Adrenal gland (tissue), 19 donors: ENCODE measurements at regions of chr7 and their contacts with region 1.

Region 1: GRCh38 chr7:2354186-2354938 is at the start of gene EIF3B:
- DNase-seq: peak; percentile 88 to 96 (median 91)
- H3K4me3 ChIP-seq: peak within 1 kb of the TSS; percentile 61 to 94 (median 80)
- H3K27ac ChIP-seq: peak within 1 kb of the TSS; percentile 71 to 100 (median 96)
- H3K4me1 ChIP-seq: peaks cover 25 to 41% of the 10 kb centered on the region in 2 donors
- H3K27me3 ChIP-seq: no peaks in the 10 kb centered on the region
- CTCF ChIP-seq: peak in 3 of 6 experiments; percentile 5 to 30 (median 15)
- POLR2A ChIP-seq: peak; percentile 68 to 77
- total RNA-seq, gene EIF3B: 81.4 to 149 (median 110) TPM

Region 2: DNA sequence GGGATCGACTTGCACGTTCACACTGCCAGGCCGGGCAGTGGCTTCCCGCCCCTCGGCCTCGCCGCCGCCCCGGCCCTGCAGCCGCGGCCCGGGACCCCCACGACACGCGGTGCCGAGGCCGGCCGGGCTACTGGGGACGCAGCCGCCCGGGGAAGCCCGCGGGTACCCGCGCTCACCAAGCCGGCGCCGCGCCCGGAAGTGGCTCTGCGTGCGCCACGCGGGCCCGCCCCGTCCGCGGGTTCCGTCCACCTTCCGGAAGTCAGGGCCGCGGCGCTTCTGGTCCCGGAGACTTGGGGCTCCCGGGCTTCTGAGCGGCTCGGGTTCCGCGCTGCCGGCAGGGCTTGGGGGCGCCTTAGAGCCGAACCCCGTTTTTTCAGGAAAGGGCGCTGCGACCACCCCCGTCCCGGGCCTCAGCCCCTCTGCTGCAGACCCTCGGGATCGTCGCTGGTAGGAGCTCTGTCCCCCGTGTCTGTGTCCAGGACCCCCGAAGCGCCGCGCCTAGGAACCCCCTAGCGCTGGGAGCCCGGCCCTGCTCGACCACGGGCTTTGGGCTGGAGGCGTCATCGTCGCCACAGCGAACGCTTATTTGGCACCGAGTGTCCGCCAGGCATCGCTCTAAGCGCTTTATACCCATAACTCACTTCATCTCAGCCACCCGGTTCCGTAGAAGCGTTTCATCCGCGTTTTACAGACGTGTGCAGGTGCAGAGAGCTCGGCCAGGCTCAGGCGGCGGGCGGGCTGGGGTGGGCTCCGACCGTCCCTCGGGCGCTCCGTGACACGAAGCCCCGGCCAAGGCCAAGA is 784.3 kb before region 1 on chr7 and contains the start of gene PSMG3:
- intact Hi-C with region 1: loop called in 1 of 2 experiments (anchors 10 kb)
- DNase-seq: peak; percentile 88 to 94 (median 91)
- H3K4me3 ChIP-seq: peak within 1 kb of the TSS; percentile 65 to 91 (median 83)
- H3K27ac ChIP-seq: peak within 1 kb of the TSS; percentile 87 to 94 (median 92)
- H3K4me1 ChIP-seq: peaks cover 22 to 24% of the 10 kb centered on the region in 2 donors
- H3K27me3 ChIP-seq: no peaks in the 10 kb centered on the region
- CTCF ChIP-seq: peak in 5 of 6 experiments; percentile 27 to 60 (median 39)
- POLR2A ChIP-seq: peak; percentile 67 to 74
- total RNA-seq, gene PSMG3: 19.1 to 64.3 (median 26.1) TPM

Region 3: DNA sequence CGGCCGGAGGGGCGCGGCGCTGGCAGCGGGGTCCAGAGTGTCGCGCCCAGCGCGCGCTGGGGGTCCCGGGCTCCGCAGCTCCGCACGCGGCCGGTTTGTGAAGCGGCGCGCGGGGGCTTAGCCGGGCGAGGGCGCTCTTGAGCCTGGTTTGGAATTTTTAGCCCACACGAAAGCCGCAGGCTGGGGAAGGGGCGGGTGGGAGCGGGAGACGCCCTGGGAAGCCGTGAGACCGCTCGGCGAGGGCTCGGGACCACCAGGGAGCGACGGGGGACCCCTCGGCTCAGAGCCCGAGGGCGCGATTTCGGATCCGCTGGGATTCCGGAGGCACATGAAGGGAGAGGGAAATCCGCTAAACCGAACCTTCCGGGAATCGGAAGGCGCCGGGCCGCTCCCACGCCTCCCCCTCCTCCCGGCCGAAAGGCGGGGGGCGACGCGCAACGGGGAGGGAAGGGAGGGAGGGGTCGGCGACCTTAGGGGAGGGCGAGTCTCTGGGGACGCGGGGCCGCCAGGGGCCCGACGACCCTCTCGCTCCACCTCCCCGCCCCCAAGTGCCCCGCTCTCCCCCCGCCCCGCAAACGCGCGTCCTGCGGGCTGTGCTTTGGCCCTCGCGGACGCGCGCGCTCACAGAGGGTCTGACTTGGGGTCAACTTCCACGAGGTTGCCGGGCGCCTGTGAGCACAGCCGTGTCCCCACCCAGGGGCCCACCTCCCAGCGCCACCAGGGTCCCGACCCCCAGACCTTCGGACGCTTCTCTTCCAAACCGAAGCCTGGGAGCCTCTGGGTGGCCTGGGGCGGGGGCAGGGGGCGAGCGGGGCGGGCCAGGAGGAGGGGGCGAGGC is 689.4 kb before region 1 on chr7:
- intact Hi-C with region 1: loop called (anchors 10 kb)
- DNase-seq: peak in 6 of 7 donors; percentile 31 to 68 (median 60)
- H3K4me3 ChIP-seq: peak overlapping the region in 2 of 4 donors; percentile 33 to 68
- H3K27ac ChIP-seq: peak overlapping the region in 1 of 5 donors; percentile 40
- H3K4me1 ChIP-seq: peaks cover 21 to 29% of the 10 kb centered on the region in 2 donors
- H3K27me3 ChIP-seq: peaks cover 54% of the 10 kb centered on the region
- CTCF ChIP-seq: peak; percentile 25 to 68 (median 49)
- POLR2A ChIP-seq: no peak

Region 4: DNA sequence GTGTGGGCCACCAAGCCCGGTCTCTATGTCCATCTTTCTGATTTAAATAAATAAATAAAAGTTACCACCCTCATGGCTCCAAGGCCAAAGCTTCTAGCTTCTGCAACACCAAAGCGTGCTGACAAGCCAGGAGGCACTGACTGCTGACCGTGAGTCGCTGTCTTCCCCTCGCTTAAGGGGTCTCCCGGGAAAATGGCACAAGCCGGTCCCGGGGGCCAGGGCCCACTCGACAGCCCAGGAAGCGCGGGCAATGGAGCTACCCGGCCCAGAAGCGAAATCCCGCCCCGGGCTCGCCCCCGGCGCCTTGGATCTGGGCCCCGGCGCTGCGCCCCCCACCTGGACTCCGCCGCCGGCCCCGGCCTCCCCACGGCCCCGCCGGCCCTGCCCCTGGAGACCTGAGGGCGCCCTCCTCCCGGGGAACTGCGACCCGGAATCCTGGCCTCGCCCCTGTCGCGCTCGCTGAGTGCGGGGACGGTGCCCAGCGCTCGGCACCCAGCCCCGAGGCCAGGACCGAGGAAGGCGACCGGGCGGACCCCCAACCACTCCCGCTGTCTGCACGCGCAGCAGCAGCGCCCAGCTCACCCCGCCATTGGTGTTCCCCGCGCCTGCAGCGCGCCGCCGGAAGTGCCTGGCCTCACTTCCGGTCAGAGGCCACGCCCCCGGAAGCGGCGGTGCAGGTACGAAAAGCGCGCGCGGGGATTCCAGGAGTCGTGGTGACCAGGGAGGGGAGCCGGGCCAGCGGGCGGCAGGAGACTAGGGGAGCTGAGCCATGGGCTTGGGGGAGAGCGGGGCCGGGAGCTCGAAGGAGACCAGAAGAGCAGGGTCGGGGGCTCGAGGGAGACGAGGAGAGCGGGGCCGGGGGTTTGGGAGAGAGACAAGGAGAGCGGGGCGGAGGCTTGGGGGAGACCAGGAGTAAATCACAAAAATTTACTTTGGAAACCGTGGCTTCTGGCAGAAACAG is 112.5 kb before region 1 on chr7 and contains the starts of genes MRM2 and NUDT1:
- intact Hi-C with region 1: loop called (anchors 10 kb)
- DNase-seq: peak; percentile 76 to 89 (median 84)
- H3K4me3 ChIP-seq: peak within 1 kb of the TSS; percentile 63 to 98 (median 72)
- H3K27ac ChIP-seq: peak within 1 kb of the TSS in 2 of 5 donors; percentile 49 to 80
- H3K4me1 ChIP-seq: peaks cover 4 to 16% of the 10 kb centered on the region in 2 donors
- H3K27me3 ChIP-seq: no peaks in the 10 kb centered on the region
- CTCF ChIP-seq: no peak
- POLR2A ChIP-seq: peak; percentile 23 to 35
- total RNA-seq, gene MRM2: 16.8 to 36.7 (median 25.9) TPM
- total RNA-seq, gene NUDT1: 3.8 to 13.3 (median 8.6) TPM

Region 5: DNA sequence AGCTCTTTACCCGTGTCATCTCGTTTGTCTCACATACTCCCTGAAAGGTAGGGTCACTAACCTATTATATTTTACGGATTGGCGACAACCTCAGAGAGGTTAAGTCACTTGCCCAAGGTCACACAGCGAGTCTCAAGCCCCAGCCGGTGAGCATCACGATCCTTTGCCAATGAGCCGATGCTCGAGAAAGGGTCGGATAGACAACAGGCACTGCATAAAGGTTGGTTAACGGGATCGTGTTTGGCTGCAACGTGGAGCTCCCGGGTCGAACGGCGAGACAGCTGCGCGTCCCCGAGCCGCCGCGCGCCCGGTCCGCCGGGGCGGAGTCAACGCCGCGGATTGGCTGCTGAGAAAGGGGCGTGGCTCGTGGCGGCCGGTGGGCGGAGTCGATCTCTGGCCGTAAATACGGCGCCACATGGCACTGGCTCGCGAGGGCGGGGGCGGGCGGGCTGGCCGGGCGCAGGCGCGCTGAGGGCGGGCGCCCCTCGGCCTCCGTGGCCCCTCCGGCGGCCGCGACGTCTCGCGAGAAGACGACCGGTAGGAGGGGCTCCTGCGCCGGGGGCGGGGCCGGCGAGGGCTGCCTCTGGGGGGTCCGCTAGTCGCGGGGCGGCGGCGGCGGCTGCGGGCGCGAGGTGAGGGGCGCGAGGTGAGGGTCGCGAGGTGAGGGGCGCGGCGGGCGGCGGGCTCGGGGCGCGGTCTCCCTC is 48.8 kb after region 1 on chr7 and contains the start of gene CHST12:
- intact Hi-C with region 1: loop called in 1 of 2 experiments (anchors 5 kb)
- DNase-seq: peak; percentile 94 to 98 (median 96)
- H3K4me3 ChIP-seq: peak within 1 kb of the TSS; percentile 64 to 90 (median 81)
- H3K27ac ChIP-seq: peak within 1 kb of the TSS in 4 of 5 donors; percentile 55 to 89 (median 64)
- H3K4me1 ChIP-seq: peaks cover 39 to 54% of the 10 kb centered on the region in 2 donors
- H3K27me3 ChIP-seq: no peaks in the 10 kb centered on the region
- CTCF ChIP-seq: no peak
- POLR2A ChIP-seq: peak in 1 of 2 donors; percentile 25
- total RNA-seq, gene CHST12: 4.3 to 31.2 (median 21.4) TPM